WTC11 (cell line): ENCODE measurements at regions of chr1 and their contacts with region 1.

Region 1: DNA sequence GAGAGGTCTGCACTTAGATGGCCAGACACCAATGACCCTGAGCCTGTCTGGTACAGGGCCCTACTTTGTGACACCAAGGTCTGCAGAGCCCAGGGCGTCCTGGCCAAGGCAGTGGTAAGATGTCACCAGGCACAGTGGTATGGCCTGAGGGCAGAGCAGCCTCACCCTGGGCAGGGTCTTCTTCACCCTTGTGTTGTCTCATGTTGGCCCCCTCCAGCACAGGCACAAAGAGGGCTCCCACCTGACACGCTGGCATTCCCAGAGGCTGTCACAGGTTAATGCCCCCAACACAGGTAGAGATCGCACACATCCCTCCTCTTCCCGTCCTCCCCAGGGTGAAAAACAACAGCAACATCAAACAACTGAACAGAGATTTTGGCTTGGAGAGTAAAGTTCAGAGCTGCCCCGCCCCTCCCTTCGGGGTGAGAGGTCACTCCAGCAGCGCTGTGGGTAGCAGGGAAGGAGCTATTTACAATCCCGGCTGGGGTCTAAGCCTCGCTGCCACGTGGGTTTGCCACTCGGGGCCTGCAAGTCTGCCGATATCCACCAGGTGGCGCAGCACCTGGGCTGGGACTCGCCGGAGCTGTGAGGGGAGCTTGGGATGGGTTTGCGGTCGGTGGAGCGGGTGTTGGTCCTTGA is 12.6 kb downstream of the EFNA3 start:
- DNase-seq: peak; percentile 94
- ATAC-seq: peak; percentile 80
- H3K4me3 Mint-ChIP-seq: peak overlapping the region; percentile 32
- H3K27ac Mint-ChIP-seq: no peak overlapping the region
- H3K4me1 Mint-ChIP-seq: peaks cover 30% of the 10 kb centered on the region
- H3K27me3 Mint-ChIP-seq: peaks cover 12% of the 10 kb centered on the region
- CTCF ChIP-seq: peak; percentile 99

Region 2: GRCh38 chr1:154847891-154848290 is 243.3 kb before region 1 on chr1:
- CTCF ChIA-PET with region 1: no interaction called
- POLR2A ChIA-PET with region 1: no interaction called
- DNase-seq: no peak
- ATAC-seq: no peak
- H3K4me3 Mint-ChIP-seq: no peak overlapping the region
- H3K27ac Mint-ChIP-seq: no peak overlapping the region
- H3K4me1 Mint-ChIP-seq: peaks cover 29% of the 10 kb centered on the region
- H3K27me3 Mint-ChIP-seq: no peaks in the 10 kb centered on the region; the same call in 1 of the 2 replicates
- CTCF ChIP-seq: no peak

Region 3: GRCh38 chr1:155001675-155002463 is 89.3 kb before region 1 on chr1:
- CTCF ChIA-PET with region 1: interaction called, 17 read pairs
- POLR2A ChIA-PET with region 1: no interaction called
- DNase-seq: peak; percentile 100
- ATAC-seq: peak; percentile 73
- H3K4me3 Mint-ChIP-seq: peak overlapping the region; percentile 88
- H3K27ac Mint-ChIP-seq: peak overlapping the region; percentile 57; the same call in 1 of the 2 replicates
- H3K4me1 Mint-ChIP-seq: peaks cover 39% of the 10 kb centered on the region
- H3K27me3 Mint-ChIP-seq: no peaks in the 10 kb centered on the region; the same call in 1 of the 2 replicates
- CTCF ChIP-seq: no peak

Region 4: DNA sequence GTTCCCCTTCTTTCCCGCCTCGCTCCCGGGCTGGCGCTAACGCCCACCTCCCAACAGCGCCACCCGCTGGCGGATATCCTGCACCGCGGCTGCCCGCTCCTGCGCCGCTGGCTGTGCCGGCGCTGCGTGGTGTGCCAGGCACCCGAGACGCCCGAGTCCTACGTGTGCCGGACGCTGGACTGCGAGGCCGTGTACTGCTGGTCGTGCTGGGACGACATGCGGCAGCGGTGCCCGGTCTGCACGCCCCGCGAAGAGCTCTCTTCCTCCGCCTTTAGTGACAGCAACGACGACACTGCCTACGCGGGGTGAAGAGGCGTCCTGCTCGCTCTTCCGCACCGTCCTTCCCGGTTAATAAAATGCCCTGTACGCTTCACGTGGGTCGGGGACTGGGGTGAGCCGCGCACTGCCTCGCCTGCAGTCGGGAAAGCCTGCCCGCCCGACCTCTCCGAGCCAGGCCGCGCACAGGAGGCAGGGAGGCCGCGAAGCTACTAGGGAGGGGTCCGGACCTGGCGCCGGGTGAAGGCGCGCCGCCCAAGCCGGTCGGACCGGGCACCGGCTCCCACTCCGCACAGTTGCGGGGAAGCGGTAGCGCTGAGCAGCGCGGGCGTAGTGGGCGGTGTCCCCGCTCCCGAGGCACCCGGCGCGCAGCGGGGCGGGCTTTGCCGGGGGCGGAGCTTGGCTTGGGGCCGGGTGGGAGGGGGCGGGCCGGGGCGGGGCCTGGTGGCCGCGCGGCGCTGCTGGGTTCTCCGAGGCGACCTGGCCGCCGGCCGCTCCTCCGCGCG is 40.4 kb before region 1 on chr1 and contains the start of gene ADAM15:
- CTCF ChIA-PET with region 1: interaction called, 88 read pairs
- POLR2A ChIA-PET with region 1: no interaction called
- DNase-seq: peak; percentile 92
- ATAC-seq: peak; percentile 72
- H3K4me3 Mint-ChIP-seq: peak within 1 kb of the TSS; percentile 82
- H3K27ac Mint-ChIP-seq: peak within 1 kb of the TSS; percentile 72; the same call in 1 of the 2 replicates
- H3K4me1 Mint-ChIP-seq: peaks cover 33% of the 10 kb centered on the region
- H3K27me3 Mint-ChIP-seq: peaks cover 20% of the 10 kb centered on the region
- CTCF ChIP-seq: peak; percentile 97
- total RNA-seq, gene ADAM15: 32.1 to 38.4 TPM (median 33.2 TPM) in 3 replicates

Region 5: GRCh38 chr1:155078469-155079209 is 12.6 kb before region 1 on chr1 and contains the start of gene EFNA3:
- CTCF ChIA-PET with region 1: interaction called, 62 read pairs
- POLR2A ChIA-PET with region 1: no interaction called
- DNase-seq: peak; percentile 84
- ATAC-seq: peak; percentile 38
- H3K4me3 Mint-ChIP-seq: peak within 1 kb of the TSS; percentile 76
- H3K27ac Mint-ChIP-seq: no peak within 1 kb of the TSS
- H3K4me1 Mint-ChIP-seq: peaks cover 25% of the 10 kb centered on the region
- H3K27me3 Mint-ChIP-seq: peaks cover 84% of the 10 kb centered on the region
- CTCF ChIP-seq: no peak
- total RNA-seq, gene EFNA3: 12.5 to 15.4 TPM (median 15.4 TPM) in 3 replicates

Region 6: DNA sequence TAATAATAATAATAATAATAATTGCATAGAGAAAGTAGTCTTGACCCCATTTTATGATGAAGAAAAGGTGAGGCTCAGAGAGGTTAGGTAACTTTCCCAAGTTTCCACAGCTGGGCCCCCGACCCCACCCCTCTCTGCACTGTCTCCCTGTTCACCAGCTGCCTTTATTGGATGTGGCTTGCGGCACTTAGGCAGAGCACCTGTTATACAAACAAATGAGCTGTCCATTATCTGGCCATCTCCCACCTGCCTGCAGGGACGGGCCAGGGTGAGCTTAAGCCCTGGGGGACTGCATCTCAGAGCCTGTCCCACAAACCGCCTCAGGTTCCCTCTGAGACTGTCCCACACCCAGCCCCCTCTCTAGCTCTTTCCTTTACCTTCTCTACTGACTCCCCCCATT is 26.4 kb after region 1 on chr1:
- CTCF ChIA-PET with region 1: interaction called, 152 read pairs
- POLR2A ChIA-PET with region 1: no interaction called
- DNase-seq: no peak
- ATAC-seq: no peak
- H3K4me3 Mint-ChIP-seq: no peak overlapping the region
- H3K27ac Mint-ChIP-seq: no peak overlapping the region
- H3K4me1 Mint-ChIP-seq: no peaks in the 10 kb centered on the region
- H3K27me3 Mint-ChIP-seq: peaks cover 36% of the 10 kb centered on the region
- CTCF ChIP-seq: no peak

Region 7: DNA sequence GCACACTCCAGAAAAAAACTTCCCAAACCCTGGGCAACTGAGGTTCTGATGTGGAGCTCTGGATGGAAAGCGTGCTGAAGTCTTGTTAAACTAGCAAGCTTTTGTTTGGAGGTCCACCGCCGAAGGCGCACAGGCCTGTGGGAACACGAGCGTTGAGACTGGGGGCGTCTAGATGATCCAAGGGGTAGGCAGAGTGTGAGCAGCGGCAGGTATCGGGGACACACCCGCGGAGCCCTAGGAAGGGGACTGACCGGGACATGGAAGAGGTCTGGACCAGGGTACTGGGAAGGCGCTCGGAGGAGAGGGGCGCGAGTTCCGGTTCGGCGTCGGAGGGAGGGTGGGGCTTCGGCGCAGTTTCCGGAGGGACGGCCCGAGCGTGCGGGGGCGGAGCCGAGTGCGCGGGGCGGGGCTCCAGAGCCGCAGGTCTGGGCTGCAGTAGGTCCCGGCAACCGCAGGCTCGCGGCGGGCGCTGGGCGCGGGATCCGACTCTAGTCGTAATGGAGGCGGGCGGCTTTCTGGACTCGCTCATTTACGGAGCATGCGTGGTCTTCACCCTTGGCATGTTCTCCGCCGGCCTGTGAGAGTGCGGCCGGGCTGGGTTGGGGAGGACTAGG is 44.3 kb after region 1 on chr1 and contains the start of gene SLC50A1:
- CTCF ChIA-PET with region 1: interaction called, 152 read pairs
- POLR2A ChIA-PET with region 1: interaction called, 3 read pairs
- DNase-seq: peak; percentile 97
- ATAC-seq: peak; percentile 87
- H3K4me3 Mint-ChIP-seq: peak within 1 kb of the TSS; percentile 96
- H3K27ac Mint-ChIP-seq: peak within 1 kb of the TSS; percentile 96
- H3K4me1 Mint-ChIP-seq: peaks cover 21% of the 10 kb centered on the region
- H3K27me3 Mint-ChIP-seq: peaks cover under 1% of the 10 kb centered on the region; the same call in 1 of the 2 replicates
- CTCF ChIP-seq: no peak
- total RNA-seq, gene SLC50A1: 39.0 to 47.8 TPM (median 46.0 TPM) in 3 replicates

Region 8: DNA sequence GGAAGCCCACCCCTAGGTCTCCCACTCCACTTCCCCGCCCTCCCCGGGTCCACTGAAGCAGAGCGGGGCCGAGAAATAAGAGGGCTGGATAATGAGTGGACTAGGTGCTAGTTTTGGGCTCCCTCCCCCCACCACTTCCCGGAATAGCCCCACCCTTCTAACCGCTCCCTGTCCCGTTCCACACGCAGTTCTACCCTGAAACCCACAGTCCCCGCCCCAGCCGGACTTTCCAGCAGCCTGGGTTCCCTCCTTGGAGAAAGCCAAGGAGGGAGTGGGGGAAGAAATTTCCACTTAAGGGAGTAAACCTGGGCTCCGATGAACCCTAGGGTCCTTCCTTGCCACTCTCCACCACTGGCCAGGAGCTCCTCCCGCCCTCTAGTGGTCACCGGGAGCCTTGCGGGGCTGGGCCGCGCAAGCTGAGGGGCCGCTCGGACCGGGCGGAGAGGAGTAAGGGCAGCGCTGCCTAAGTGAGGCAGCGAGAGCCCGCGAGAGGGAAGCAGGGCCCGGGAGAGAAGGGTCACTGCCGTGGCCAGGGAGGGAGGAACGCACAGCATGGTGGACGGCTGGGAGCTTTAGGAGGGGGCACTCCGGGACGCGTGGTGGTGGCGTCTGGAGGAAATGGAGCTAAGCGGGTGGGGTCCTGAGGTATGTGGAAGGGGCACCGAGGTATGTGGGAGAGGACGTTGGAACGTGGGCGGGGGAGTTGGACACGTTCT is 102.2 kb after region 1 on chr1:
- CTCF ChIA-PET with region 1: interaction called, 26 read pairs
- POLR2A ChIA-PET with region 1: interaction called, 6 read pairs
- DNase-seq: peak; percentile 97
- ATAC-seq: peak; percentile 67
- H3K4me3 Mint-ChIP-seq: peak overlapping the region; percentile 99
- H3K27ac Mint-ChIP-seq: peak overlapping the region; percentile 99
- H3K4me1 Mint-ChIP-seq: peaks cover 34% of the 10 kb centered on the region
- H3K27me3 Mint-ChIP-seq: peaks cover 4% of the 10 kb centered on the region; the same call in 1 of the 2 replicates
- CTCF ChIP-seq: peak; percentile 98

Region 9: GRCh38 chr1:155218854-155219591 is 127.8 kb after region 1 on chr1:
- CTCF ChIA-PET with region 1: no interaction called
- POLR2A ChIA-PET with region 1: no interaction called
- DNase-seq: no peak
- ATAC-seq: peak; percentile 28
- H3K4me3 Mint-ChIP-seq: peak overlapping the region; percentile 56
- H3K27ac Mint-ChIP-seq: peak overlapping the region; percentile 82
- H3K4me1 Mint-ChIP-seq: peaks cover 12% of the 10 kb centered on the region
- H3K27me3 Mint-ChIP-seq: no peaks in the 10 kb centered on the region
- CTCF ChIP-seq: no peak

Region 10: GRCh38 chr1:155261852-155262673 is 170.9 kb after region 1 on chr1 and contains the start of gene SCAMP3:
- CTCF ChIA-PET with region 1: no interaction called
- POLR2A ChIA-PET with region 1: no interaction called
- DNase-seq: peak; percentile 92
- ATAC-seq: peak; percentile 94
- H3K4me3 Mint-ChIP-seq: peak within 1 kb of the TSS; percentile 96
- H3K27ac Mint-ChIP-seq: peak within 1 kb of the TSS; percentile 97
- H3K4me1 Mint-ChIP-seq: peaks cover 14% of the 10 kb centered on the region
- H3K27me3 Mint-ChIP-seq: no peaks in the 10 kb centered on the region
- CTCF ChIP-seq: no peak
- total RNA-seq, gene SCAMP3: 50.0 to 58.8 TPM (median 52.2 TPM) in 3 replicates